ENCODE measurements at regions of chr11 and their contacts with region 1.

Region 1: DNA sequence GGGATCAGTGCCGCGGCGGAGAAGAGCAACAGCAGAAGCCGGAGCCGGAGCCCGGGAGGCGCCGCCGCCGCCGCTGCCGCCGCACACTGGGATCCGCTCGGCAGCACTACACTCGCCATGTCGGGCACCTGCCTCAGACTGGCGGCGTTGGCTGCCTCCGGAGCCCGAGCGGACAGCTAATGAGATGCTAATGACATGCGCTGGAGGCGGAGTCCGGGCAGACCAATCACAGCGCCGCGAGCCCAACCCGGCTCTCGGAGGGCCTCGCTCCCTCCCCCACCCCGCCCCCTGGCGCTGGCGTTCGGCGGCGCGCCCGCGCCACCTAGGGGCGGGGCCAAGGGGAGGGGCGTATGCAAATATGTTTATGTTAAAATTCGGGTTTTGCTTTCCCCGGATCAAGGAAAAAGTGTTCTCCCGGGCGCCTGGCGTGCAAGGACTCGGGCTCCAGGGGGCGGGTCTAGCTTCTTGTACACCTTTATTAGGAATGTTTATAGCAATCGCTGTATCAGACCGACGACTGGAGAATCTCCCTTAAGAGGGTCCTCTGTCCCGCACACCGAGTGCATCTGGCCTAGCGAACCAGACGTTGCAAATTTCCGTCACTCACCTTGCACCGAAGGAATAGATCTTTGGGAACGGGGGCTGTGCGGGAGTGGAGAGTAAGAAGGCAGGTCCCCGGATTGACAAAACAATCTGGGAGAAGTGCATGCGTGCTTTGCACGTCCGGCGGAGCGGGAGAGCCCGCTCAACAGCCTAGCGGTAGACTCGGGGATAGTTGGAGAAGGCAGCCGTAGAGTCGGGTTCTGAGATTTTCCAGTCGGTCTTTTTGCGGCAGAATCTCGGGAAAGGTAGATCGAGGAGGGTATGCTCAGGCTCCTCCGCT is at the start of gene CADM1:
- DNase-seq: peak; percentile 92
- H3K4me3 ChIP-seq: peak within 1 kb of the TSS; percentile 73
- H3K27ac ChIP-seq: peak within 1 kb of the TSS; percentile 94
- H3K4me1 ChIP-seq: peaks cover 51% of the 10 kb centered on the region
- H3K27me3 ChIP-seq: peaks cover 67% of the 10 kb centered on the region
- CTCF ChIP-seq: peak; percentile 76
- total RNA-seq, gene CADM1: 51.1 TPM

Region 2: GRCh38 chr11:115391598-115391997 is 112.9 kb before region 1 on chr11:
- intact Hi-C with region 1: no loop called
- DNase-seq: no peak
- H3K4me3 ChIP-seq: no peak overlapping the region
- H3K27ac ChIP-seq: no peak overlapping the region
- H3K4me1 ChIP-seq: peaks cover 31% of the 10 kb centered on the region
- H3K27me3 ChIP-seq: no peaks in the 10 kb centered on the region
- CTCF ChIP-seq: no peak

Region 3: DNA sequence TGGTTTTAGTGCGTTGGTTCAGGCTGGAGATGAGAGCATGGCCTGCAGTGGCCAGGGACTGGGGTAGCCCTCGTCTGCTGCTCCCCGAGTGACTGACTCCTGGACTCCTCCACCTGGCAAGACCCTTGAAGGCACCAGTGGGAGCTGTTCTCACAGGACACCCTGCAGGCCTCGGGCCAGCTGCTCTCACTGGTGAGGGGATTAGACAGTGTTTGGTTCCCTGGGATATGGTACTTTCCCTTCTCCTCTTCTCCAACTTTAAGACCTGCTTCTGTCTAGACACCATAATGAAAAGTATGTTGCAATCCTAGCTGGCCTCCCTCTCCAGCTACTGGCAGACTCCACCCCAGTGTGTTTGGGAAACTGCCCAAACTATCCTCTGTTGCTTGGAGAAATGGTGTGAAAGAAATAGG is 168.5 kb after region 1 on chr11:
- intact Hi-C with region 1: loop called (anchors 10 kb)
- DNase-seq: peak; percentile 30
- H3K4me3 ChIP-seq: no peak overlapping the region
- H3K27ac ChIP-seq: peak overlapping the region; percentile 43
- H3K4me1 ChIP-seq: peaks cover 19% of the 10 kb centered on the region
- H3K27me3 ChIP-seq: no peaks in the 10 kb centered on the region
- CTCF ChIP-seq: no peak

Measured in left ventricle myocardium inferior (tissue), 1 donor.